H1 (cell line): ENCODE measurements at regions of chr6 and their contacts with region 1.

Region 1: DNA sequence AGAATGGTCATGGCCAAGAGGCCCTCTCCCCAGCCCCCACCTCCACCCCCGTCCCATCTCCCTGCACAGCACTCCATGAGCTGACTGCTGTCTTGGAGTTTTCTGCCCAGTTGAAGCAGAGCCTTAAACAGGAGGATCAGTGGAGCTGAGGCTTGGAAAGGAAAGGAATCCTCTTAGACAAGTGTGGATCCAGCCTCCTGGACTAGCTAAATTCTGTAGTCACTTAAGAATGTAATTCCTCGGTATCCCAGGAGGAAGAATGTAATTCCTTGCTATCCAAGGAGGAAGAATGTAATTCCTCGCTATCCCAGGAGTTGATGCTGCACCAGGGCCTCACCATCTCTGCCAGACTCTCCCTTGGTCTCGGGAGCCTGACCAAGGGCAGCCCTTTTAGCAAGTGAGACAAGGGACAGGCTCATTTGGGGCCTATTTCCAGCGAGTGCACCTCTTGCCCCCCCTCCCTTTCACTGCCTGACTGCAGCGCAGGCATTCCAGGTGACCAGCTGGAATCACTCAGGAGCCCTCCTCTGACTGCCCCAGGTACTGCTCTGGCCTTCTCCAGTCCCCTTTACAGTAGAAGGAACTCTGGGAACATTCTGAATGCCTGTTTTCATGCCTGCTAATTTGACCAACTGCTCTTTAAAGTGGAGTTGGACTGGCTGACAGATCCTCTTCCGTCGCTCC is 76.2 kb downstream of the TCP11 start:
- DNase-seq: no peak
- H3K4me3 ChIP-seq: no peak overlapping the region
- H3K27ac ChIP-seq: 0 out of 2 replicates have a peak overlapping the region, but pooled peaks have one; percentile 34
- H3K4me1 ChIP-seq: peaks cover 0 to 16% (median 9%) of the 10 kb centered on the region in 4 experiments; a peak in 6 of 7 replicates
- H3K27me3 ChIP-seq: no peaks in the 10 kb centered on the region
- CTCF ChIP-seq: peak in 2 of 3 experiments; percentile 50 to 56; a peak in 3 of 4 replicates
- EP300 ChIP-seq: no peak
- POLR2A ChIP-seq: no peak
- RAD21 ChIP-seq: peak; percentile 52 to 63

Region 2: DNA sequence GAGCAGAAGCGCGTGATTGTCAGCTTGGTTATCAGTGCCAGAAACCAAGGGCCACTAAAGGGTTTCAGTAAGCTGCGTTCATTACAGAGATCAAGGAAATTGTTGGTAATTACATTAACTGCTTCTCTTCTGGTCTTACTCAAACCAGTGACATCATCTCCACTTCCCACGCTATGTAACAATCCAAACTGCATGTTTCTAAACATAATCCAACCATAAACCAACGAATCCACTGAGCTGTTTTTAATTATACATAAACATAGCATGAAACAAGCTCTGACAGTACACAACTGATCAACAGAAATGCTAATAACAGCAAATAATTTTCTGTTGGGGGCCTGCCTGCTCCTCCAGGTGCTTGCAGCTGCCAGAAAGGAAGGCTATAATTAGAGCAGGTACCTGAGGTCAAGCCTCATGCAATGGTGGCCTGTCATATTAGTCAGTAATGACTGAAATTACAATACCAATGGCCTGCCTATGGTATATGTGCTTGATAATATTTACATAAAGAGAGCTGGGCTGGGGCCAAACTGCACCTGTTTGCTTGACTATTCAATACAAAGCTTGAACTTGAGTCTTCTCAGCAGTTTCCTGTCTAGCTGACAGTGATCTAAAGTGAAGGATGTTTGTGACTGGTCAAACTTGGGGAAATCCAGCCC is 408.4 kb before region 1 on chr6:
- CTCF ChIA-PET with region 1: no interaction called
- POLR2A ChIA-PET with region 1: no interaction called
- DNase-seq: no peak
- H3K4me3 ChIP-seq: no peak overlapping the region
- H3K27ac ChIP-seq: no peak overlapping the region
- H3K4me1 ChIP-seq: peaks cover 0 to 8% (median 3%) of the 10 kb centered on the region in 4 experiments; a peak in 4 of 7 replicates
- H3K27me3 ChIP-seq: no peaks in the 10 kb centered on the region
- CTCF ChIP-seq: no peak
- EP300 ChIP-seq: no peak
- POLR2A ChIP-seq: no peak
- RAD21 ChIP-seq: no peak

Region 3: DNA sequence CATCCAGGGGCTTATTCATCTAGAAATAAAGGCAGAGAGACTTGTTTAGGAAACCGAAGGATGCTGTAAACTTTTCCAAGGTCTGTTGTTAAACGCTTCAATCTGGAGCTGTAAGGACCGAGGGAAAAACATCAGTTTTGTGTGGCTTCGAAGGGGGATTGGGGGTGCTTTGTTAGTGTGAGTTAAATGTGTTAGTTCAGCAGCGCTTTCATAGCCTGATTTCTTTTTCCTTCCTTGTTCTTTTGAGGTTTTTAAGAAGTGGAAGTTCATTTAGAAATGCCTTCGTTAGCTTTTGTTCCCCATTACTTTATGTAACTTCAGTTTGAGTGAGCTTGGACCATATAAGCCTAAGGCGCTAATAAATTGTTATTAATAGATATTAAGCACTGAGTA is 174.4 kb before region 1 on chr6:
- CTCF ChIA-PET with region 1: no interaction called
- POLR2A ChIA-PET with region 1: no interaction called
- DNase-seq: no peak
- H3K4me3 ChIP-seq: peak overlapping the region; percentile 73 to 90 (median 76); a peak in 5 of 8 replicates
- H3K27ac ChIP-seq: no peak overlapping the region
- H3K4me1 ChIP-seq: peaks cover 0 to 4% (median 0%) of the 10 kb centered on the region in 4 experiments; a peak in 3 of 7 replicates
- H3K27me3 ChIP-seq: no peaks in the 10 kb centered on the region
- CTCF ChIP-seq: no peak
- EP300 ChIP-seq: no peak
- POLR2A ChIP-seq: no peak
- RAD21 ChIP-seq: no peak

Region 4: DNA sequence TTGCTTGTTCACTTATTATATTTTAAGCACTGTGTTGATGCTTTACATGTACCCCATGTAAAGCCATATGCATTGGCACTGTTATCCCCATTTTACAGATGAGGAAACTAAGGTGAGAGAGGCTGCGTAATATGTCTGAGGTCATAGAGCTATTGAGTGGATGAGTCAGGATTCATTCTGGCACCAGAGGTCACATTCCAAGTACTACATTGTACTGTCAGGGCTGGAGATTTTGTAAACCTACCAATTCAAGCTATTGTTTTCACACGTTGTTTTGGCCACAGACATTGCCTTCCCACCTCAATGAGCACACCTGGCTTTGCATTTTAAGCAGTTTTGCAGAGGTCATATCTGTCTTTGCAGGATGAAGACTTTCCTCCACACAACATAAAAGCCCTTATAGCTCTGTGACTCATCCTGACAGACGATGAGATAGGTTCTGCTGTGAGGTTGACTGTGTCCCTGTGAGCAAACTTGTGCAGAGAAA is 142.7 kb before region 1 on chr6:
- CTCF ChIA-PET with region 1: no interaction called
- POLR2A ChIA-PET with region 1: no interaction called
- DNase-seq: no peak
- H3K4me3 ChIP-seq: no peak overlapping the region
- H3K27ac ChIP-seq: no peak overlapping the region
- H3K4me1 ChIP-seq: peaks cover 0 to 7% (median 4%) of the 10 kb centered on the region in 4 experiments; a peak in 3 of 7 replicates
- H3K27me3 ChIP-seq: no peaks in the 10 kb centered on the region; a peak in 1 of 7 replicates
- CTCF ChIP-seq: no peak
- EP300 ChIP-seq: no peak
- POLR2A ChIP-seq: no peak
- RAD21 ChIP-seq: no peak

Region 5: DNA sequence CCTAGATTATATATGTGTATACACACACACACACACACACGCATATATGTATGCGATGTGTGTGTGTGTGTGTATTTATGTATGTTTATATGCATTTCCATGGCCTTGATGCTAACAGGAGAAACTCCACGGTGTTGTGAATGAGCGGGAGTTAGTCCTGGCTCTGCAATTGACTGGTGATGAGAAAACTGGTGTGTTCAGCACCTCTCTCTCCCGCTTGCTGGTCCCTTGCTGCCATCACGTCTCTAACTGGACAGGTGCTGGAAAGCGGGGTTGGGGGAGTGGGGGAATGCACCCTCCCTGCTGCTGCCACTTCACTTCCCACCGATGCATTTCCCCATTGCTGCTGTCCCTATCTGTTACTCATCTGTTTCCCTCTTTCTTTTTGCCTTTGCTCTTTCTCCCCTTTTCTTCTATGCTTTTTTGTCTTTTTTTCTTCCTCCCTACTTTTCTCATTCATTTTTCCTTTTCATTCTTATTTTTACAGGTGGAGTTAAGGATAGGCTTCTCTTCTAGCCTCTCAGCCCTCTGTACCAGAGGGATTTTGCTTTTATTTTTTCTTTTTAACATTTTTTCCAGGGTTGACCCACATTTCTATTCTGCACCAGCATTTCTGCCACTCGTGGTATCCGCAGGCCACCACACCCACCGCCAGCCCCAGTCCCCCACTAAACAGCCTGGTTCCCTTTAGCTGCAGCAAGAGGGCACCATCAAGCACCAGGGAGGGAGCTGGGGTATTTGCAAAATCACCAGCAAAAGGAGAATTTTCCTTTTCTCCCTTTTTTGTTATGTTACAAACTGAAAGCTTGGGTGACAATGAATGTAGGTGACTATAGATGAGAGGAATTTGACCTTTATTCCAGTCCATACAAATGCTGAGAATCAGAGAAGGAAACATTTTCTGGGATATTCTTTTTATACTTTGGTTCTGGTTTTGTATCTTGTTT is 39.4 kb before region 1 on chr6:
- CTCF ChIA-PET with region 1: interaction called, 12 read pairs
- POLR2A ChIA-PET with region 1: no interaction called
- DNase-seq: no peak
- H3K4me3 ChIP-seq: peak overlapping the region in 1 of 4 experiments; percentile 18; a peak in 1 of 8 replicates
- H3K27ac ChIP-seq: no peak overlapping the region
- H3K4me1 ChIP-seq: peaks cover 6 to 40% (median 30%) of the 10 kb centered on the region in 4 experiments
- H3K27me3 ChIP-seq: no peaks in the 10 kb centered on the region
- CTCF ChIP-seq: peak; percentile 50 to 55 (median 50)
- EP300 ChIP-seq: no peak
- POLR2A ChIP-seq: no peak
- RAD21 ChIP-seq: peak; percentile 34 to 58; a peak in 2 of 4 replicates

Region 6: DNA sequence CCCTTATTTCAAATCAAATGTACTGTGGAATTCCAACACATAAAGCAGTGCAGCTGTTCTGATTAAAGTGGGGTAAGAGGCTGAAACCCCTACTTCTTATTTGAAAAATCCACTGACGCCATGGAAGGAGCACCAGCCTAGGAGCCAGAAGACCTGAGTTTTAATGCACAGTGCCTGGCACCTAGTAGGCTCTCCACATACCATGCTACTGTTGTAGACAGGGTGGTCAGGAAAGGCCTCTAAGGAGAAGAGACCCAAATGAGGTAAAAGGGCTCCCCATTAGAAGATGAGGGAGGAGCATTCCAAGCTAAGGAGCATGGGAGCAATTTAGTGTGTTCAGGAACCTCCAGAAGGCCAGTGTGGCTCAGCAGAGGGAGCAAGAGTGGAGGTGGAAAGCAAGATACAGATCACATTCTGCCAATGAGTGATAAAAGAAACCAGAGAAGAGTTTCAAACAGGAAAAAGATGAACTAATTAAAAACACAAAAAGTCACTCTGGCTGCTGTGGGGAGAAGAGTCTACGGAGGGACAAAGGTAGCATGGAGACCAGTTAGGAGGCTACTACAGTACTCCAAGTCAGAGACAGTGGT is 182.8 kb after region 1 on chr6:
- CTCF ChIA-PET with region 1: no interaction called
- POLR2A ChIA-PET with region 1: no interaction called
- DNase-seq: no peak
- H3K4me3 ChIP-seq: no peak overlapping the region
- H3K27ac ChIP-seq: no peak overlapping the region
- H3K4me1 ChIP-seq: peaks cover 0 to 7% (median 2%) of the 10 kb centered on the region in 4 experiments; a peak in 2 of 7 replicates
- H3K27me3 ChIP-seq: no peaks in the 10 kb centered on the region
- CTCF ChIP-seq: no peak
- EP300 ChIP-seq: no peak
- POLR2A ChIP-seq: no peak
- RAD21 ChIP-seq: no peak